Caco-2 (cell line): ENCODE measurements at regions of chr2 and their contacts with region 1.

Region 1: GRCh38 chr2:37776487-37776886 is 105.0 kb upstream of the CDC42EP3 start:
- DNase-seq: peak; percentile 29 to 65
- H3K4me3 ChIP-seq: no peak overlapping the region
- H3K4me3 Mint-ChIP-seq: no peak overlapping the region
- H3K27ac Mint-ChIP-seq: peak overlapping the region; percentile 58
- H3K4me1 ChIP-seq: peaks cover 70% of the 10 kb centered on the region
- H3K4me1 Mint-ChIP-seq: peaks cover 68% of the 10 kb centered on the region
- H3K27me3 ChIP-seq: no peaks in the 10 kb centered on the region
- H3K27me3 Mint-ChIP-seq: no peaks in the 10 kb centered on the region
- CTCF ChIP-seq: no peak

Region 2: GRCh38 chr2:37795938-37796337 is 19.5 kb after region 1 on chr2:
- CTCF ChIA-PET with region 1: no interaction called
- POLR2A ChIA-PET with region 1: interaction called, 3 read pairs
- intact Hi-C with region 1: loop called (anchors 2 kb)
- DNase-seq: peak in 1 of 2 experiments; percentile 53
- H3K4me3 ChIP-seq: no peak overlapping the region
- H3K4me3 Mint-ChIP-seq: peak overlapping the region; percentile 30
- H3K27ac Mint-ChIP-seq: peak overlapping the region; percentile 82
- H3K4me1 ChIP-seq: peaks cover 57% of the 10 kb centered on the region
- H3K4me1 Mint-ChIP-seq: peaks cover 59% of the 10 kb centered on the region
- H3K27me3 ChIP-seq: no peaks in the 10 kb centered on the region
- H3K27me3 Mint-ChIP-seq: no peaks in the 10 kb centered on the region
- CTCF ChIP-seq: no peak